Dorsolateral prefrontal cortex (tissue), 120 donors: ENCODE measurements at regions of chr2 and their contacts with region 1.

Region 1: DNA sequence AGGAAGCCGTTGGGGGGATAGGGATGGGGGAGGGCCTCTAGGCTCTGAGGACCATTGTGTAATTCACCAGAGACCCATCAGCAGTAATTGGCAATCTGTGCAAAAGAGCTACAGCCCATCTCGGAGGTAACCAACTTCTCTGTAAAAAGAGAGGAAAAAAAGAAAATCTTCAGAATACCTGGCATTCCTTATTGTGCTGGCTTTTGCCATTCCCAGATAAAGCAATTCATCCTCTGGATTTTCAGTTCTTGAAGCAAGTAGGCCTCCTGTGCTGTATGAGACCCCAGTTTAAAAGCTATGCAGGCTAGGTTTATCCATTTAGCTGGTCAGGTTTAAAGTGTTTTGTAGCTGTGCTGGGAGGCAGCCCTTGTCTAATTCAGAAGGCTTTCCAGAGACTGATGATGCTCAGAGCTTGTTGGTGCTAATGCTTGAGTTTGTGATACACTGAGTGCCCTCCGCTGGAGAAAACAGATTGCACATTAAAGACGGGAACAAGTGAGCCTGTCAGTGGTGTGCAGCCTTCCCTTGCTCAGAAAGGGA is at the start of gene LRRTM4:
- DNase-seq: peak in 9 of 10 donors; percentile 11 to 82 (median 53)
- H3K4me3 ChIP-seq: peak within 1 kb of the TSS; percentile 18 to 79 (median 59)
- H3K27ac ChIP-seq: peak within 1 kb of the TSS in 54 of 59 donors; percentile 31 to 91 (median 78)
- H3K27me3 ChIP-seq: no peaks in the 10 kb centered on the region
- CTCF ChIP-seq: peak in 50 of 56 donors; percentile 13 to 65 (median 46)
- total RNA-seq, gene LRRTM4: 18.4 to 87.4 (median 55.8) TPM

Region 2: DNA sequence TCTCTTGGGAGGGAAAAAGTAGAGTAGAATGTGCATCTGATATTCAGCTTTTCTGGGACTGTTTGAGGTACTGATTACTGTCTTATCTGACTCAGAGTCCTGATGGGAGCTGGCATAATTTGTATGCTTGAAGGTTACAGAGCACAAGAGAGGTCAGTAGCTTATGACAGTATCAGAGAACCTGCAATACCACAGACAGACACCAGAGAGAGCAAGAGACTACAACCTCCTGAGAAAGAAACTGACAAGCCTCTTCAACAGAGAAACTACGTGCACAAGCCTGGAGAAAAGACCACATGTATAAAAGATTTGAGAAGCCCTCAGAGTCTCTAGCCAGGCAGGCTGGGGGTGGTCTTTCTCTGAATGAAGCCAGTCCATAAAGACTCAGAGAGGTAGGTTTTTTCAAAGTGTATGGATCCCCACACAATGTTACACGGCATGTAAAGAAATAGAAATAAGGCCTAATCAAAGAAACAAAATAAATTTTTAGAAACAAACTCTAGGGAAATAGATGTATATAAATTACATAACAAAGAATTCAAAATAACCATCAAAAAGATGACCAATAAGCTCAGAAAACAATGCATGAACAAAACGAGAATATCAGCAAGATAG is 568.2 kb before region 1 on chr2:
- intact Hi-C with region 1: loop called in 1 of 2 experiments (anchors 10 kb)
- DNase-seq: peak in 1 of 10 donors; percentile 25
- H3K4me3 ChIP-seq: no peak overlapping the region
- H3K27ac ChIP-seq: no peak overlapping the region
- H3K27me3 ChIP-seq: no peaks in the 10 kb centered on the region
- CTCF ChIP-seq: peak; percentile 26 to 90 (median 72)

Region 3: GRCh38 chr2:77336013-77336412 is 186.0 kb before region 1 on chr2:
- intact Hi-C with region 1: no loop called
- DNase-seq: no peak
- H3K4me3 ChIP-seq: no peak overlapping the region
- H3K27ac ChIP-seq: no peak overlapping the region
- H3K27me3 ChIP-seq: no peaks in the 10 kb centered on the region
- CTCF ChIP-seq: no peak

Region 4: DNA sequence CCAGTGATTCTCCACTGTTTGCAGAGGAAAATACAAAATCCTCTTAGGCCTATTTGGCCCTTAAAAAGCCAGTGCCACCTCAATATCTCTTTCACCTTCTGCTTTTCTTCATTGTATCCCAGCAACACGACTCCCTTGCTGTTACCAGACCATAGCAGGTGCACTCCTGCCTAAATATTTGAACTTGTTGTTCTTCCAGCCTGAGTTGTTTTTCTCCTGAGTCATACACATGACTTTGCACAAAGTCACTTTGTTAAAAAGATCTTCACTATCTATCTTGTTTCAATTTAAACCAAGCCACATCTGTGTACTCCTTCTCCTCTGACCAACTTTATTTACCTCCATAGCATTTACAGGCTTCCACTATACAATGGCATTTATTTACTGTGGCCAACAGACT is 103.5 kb before region 1 on chr2:
- intact Hi-C with region 1: no loop called
- DNase-seq: no peak
- H3K4me3 ChIP-seq: no peak overlapping the region
- H3K27ac ChIP-seq: no peak overlapping the region
- H3K27me3 ChIP-seq: no peaks in the 10 kb centered on the region
- CTCF ChIP-seq: no peak

Region 5: GRCh38 chr2:77434880-77435279 is 87.1 kb before region 1 on chr2:
- intact Hi-C with region 1: loop called in 1 of 2 experiments (anchors 10 kb)
- DNase-seq: no peak
- H3K4me3 ChIP-seq: no peak overlapping the region
- H3K27ac ChIP-seq: no peak overlapping the region
- H3K27me3 ChIP-seq: no peaks in the 10 kb centered on the region
- CTCF ChIP-seq: peak in 43 of 56 donors; percentile 13 to 61 (median 42)